ENCODE measurements at regions of chr12 and their contacts with region 1.

Region 1: DNA sequence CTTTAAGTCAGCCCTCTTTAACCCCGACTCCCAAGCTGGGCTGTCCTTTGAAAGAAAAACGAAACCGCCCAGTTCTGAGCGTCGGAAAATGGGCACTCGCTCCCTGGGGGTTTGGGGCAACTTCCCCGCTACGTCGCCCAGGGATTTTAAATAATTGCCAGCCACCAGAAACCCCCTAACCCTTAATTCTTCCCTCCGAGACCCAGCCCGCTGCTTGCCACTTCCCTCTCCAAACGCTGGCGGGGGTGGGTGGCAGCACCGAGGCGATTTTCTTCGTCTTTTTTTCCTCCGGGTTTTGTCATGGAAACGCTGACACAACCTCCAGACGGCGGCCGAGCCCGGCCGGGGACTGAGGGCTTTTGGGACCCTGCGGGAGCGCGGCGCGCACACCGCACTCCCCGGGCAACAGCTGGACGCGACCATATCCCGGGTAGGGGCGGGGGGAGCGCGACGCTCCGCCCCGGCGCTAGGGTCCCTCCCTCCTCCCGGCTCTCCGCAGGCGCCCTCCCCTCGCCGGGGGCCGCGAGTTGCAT is at the start of gene CHST11:
- H3K4me3 Mint-ChIP-seq: peak within 1 kb of the TSS; percentile 100
- H3K27ac Mint-ChIP-seq: peak within 1 kb of the TSS; percentile 91
- H3K4me1 Mint-ChIP-seq: peaks cover 36% of the 10 kb centered on the region
- H3K27me3 Mint-ChIP-seq: peaks cover 6% of the 10 kb centered on the region

Region 2: GRCh38 chr12:103751171-103751570 is 705.3 kb before region 1 on chr12:
- intact Hi-C with region 1: no loop called
- H3K4me3 Mint-ChIP-seq: no peak overlapping the region
- H3K27ac Mint-ChIP-seq: no peak overlapping the region
- H3K4me1 Mint-ChIP-seq: no peaks in the 10 kb centered on the region
- H3K27me3 Mint-ChIP-seq: peaks cover 6% of the 10 kb centered on the region

Region 3: GRCh38 chr12:104494137-104494792 is 37.8 kb after region 1 on chr12:
- intact Hi-C with region 1: loop called (anchors 5 kb)
- H3K4me3 Mint-ChIP-seq: peak overlapping the region; percentile 46
- H3K27ac Mint-ChIP-seq: peak overlapping the region; percentile 91
- H3K4me1 Mint-ChIP-seq: peaks cover 90% of the 10 kb centered on the region
- H3K27me3 Mint-ChIP-seq: no peaks in the 10 kb centered on the region

Region 4: GRCh38 chr12:104546575-104546974 is 90.1 kb after region 1 on chr12:
- intact Hi-C with region 1: loop called (anchors 5 kb)
- H3K4me3 Mint-ChIP-seq: no peak overlapping the region
- H3K27ac Mint-ChIP-seq: peak overlapping the region; percentile 35
- H3K4me1 Mint-ChIP-seq: peaks cover 72% of the 10 kb centered on the region
- H3K27me3 Mint-ChIP-seq: no peaks in the 10 kb centered on the region

Measured in dendritic cell treated with granulocyte-macrophage colony-stimulating factor and Interleukin-4, amounts not matched to agents 40 ng/mL and 50 ng/mL, for 4 days (primary cell).